Sciatic nerve (tissue), 2 donors: ENCODE measurements at regions of chr11 and their contacts with region 1.

Region 1: DNA sequence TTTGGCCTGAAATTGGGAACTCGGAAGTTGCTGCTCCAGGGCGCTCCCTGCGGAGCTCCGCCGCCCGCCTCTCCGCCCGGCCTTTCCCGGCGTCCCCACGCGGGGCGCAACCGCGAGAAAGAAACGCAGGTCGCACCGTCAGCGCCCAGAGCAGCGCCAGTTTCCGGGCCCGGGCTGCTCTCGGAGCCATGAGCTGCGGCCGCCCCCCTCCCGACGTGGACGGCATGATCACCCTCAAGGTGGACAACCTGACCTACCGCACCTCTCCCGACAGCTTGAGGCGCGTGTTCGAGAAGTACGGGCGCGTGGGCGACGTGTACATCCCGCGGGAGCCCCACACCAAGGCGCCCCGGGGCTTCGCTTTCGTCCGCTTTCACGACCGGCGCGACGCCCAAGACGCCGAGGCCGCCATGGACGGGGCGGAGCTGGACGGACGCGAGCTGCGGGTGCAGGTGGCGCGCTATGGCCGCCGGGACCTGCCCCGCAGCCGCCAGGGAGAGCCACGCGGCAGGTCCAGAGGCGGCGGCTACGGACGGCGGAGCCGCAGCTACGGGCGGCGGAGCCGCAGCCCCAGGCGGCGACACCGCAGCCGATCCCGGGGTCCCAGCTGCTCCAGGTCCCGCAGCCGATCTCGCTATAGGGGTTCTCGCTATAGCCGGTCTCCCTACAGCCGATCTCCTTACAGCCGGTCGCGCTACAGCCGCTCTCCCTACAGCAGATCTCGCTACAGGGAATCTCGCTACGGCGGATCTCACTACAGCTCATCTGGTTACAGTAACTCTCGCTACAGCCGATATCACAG is 521 bp downstream of the SRSF8 start:
- DNase-seq: peak; percentile 91
- ATAC-seq: peak; percentile 88

Region 2: DNA sequence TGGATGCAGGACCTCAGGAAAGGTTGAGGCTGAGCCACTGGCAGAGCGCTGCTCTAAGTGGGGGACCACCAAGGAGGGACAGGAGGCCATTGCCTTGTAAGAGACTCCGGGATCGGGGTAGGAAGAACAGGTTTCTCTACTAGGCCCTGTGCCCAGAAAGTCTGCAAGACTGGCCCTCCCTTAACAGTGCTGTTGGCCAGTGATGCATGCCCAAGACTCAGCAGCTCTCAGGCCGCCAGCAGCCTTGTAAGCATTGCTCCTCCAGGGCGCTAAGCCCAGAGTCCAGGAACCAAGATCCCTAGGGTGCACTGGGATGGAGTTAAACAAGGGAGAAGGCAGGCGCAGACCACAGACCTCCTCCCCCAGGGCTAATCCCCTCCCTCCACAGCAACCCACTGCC is 977.9 kb before region 1 on chr11:
- intact Hi-C with region 1: no loop called
- DNase-seq: no peak
- ATAC-seq: no peak

Region 3: DNA sequence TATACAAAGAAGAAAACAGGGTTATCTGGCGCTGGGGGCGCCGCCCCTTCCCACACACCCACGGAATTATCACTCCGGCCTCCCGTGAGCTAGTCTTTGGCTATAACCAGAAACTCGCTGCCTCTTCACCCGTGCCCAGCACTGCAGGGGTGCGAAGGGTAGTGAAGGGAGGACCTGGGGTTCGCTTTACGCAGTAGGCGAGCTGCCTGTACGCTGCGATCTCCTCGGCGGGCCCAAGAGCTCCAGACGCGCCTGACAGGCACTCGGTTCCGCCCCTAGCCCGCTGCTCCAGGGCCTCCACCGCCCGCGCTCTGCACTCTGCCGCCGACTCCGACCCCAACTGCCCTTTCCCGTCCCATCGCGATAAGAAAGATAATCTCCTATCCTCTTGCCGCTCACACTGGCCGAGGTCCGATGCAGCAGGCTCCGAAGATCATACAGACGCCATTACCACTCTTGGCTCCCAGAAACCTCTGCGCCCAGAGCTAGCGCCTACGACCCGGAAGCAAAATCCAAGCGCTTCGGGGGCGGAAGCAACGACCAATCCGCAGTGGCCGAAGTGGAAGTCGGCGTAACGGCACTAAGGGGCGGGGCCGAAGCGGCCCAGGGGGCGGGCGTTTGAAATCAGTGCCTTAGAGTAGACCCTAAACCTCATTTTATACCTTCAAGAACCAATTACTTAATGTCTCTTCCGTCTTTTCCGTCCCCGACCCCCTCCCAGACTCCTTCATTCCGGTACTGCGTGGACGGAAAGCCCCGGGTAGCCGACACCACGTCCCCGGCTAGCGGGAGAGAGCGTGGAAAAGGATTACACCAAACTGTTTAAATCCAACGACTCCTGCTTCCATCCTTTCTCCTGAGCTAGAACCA is 93.9 kb before region 1 on chr11 and contains the starts of genes CWC15 and KDM4D:
- intact Hi-C with region 1: loop called (anchors 5 kb)
- DNase-seq: peak; percentile 98
- ATAC-seq: peak; percentile 100
- total RNA-seq, gene CWC15: 78.8 TPM
- total RNA-seq, gene KDM4D: 0.80 TPM